CD8-positive, alpha-beta memory T cell (primary cell): ENCODE measurements at regions of chr1 and their contacts with region 1.

Region 1: DNA sequence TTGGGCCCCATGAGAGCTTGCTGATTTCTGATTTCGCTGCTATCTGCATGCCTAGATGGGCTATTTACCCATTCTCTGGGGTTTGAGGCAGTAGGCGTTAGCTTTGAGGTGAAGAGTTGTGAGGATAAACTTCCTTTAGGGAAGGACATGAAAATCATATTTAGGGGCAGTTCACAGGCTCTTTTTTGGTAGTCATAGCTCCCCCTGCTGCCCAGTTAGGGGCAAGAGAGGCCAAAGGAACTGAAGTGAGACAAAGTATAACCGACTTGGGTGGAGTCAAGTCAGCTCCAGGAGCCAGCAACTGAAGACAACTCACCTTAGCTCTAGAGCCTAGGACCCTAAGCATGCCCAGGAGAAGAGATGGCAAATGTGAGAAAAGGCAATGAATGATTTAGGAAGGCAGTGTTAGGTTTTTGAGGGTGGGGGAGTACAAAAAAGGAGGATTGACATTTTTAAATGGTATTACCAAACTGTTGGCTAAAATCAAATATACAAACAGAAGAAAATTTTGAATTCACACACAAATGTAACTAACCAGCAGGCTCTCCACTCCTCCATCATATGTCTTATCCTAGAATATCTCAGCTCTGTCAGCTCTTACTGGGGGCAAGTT is 625.2 kb downstream of the LMO4 start:
- DNase-seq: peak; percentile 3 to 62 (median 39)
- H3K4me3 ChIP-seq: no peak overlapping the region
- H3K4me3 Mint-ChIP-seq: no peak overlapping the region
- H3K27ac ChIP-seq: no peak overlapping the region
- H3K27ac Mint-ChIP-seq: no peak overlapping the region
- H3K4me1 ChIP-seq: no peaks in the 10 kb centered on the region
- H3K4me1 Mint-ChIP-seq: no peaks in the 10 kb centered on the region
- H3K27me3 ChIP-seq: no peaks in the 10 kb centered on the region
- H3K27me3 Mint-ChIP-seq: peaks cover 2 to 45% of the 10 kb centered on the region in 2 donors

Region 2: DNA sequence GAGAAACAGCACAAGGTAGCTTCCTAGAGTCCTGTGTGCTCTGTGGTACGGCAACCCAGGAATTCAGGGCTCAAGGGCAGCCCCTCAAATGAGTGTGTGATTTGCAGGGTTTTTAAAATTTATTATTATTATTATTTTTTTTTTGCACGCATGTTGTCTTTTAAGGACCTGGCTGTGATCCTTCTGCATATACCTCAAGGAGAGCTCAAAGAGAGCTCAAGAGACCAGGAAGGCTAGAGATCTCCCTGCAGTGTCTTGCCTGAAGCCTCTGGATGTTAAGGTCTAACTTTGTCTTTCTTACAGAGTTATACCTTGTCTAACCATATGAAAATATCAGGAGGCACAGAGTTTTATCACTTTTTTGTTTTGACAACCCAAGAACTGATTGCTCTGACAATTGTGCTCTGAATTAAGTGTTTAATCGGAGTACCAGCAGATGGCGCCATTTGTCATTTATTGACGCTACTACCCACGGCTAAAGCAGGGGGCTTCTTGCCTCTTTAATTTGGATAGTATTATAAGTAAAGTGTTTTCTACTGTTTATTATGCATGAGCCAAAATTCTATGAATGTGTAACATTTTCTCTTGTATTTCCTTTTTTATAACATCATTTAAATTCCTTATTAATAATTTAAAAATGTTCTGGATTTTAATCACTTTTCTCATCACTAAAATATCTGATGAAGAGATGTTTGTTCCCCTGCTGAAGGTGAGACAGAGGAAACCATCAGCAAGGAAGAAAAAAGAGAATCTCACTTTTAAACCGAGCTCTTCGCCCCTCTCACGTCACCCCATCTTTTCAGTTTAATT is 660.9 kb before region 1 on chr1:
- CTCF ChIA-PET with region 1: interaction called, 26 read pairs
- POLR2A ChIA-PET with region 1: no interaction called
- DNase-seq: peak; percentile 36 to 69 (median 48)
- H3K4me3 ChIP-seq: no peak overlapping the region
- H3K4me3 Mint-ChIP-seq: no peak overlapping the region
- H3K27ac ChIP-seq: no peak overlapping the region
- H3K27ac Mint-ChIP-seq: no peak overlapping the region
- H3K4me1 ChIP-seq: no peaks in the 10 kb centered on the region
- H3K4me1 Mint-ChIP-seq: no peaks in the 10 kb centered on the region
- H3K27me3 ChIP-seq: no peaks in the 10 kb centered on the region
- H3K27me3 Mint-ChIP-seq: peaks cover 10 to 12% of the 10 kb centered on the region in 2 donors

Region 3: GRCh38 chr1:87325982-87326738 is 627.7 kb before region 1 on chr1:
- CTCF ChIA-PET with region 1: interaction called, 22 read pairs
- POLR2A ChIA-PET with region 1: no interaction called
- DNase-seq: peak in 4 of 5 donors; percentile 38 to 55 (median 54)
- H3K4me3 ChIP-seq: no peak overlapping the region
- H3K4me3 Mint-ChIP-seq: peak overlapping the region in 3 of 7 donors; percentile 33 to 80 (median 38)
- H3K27ac ChIP-seq: no peak overlapping the region
- H3K27ac Mint-ChIP-seq: peak overlapping the region; percentile 1 to 91 (median 82)
- H3K4me1 ChIP-seq: peaks cover 10% of the 10 kb centered on the region
- H3K4me1 Mint-ChIP-seq: peaks cover 21 to 39% (median 35%) of the 10 kb centered on the region in 3 donors
- H3K27me3 ChIP-seq: no peaks in the 10 kb centered on the region
- H3K27me3 Mint-ChIP-seq: peaks cover 0 to 6% of the 10 kb centered on the region in 2 donors

Region 4: DNA sequence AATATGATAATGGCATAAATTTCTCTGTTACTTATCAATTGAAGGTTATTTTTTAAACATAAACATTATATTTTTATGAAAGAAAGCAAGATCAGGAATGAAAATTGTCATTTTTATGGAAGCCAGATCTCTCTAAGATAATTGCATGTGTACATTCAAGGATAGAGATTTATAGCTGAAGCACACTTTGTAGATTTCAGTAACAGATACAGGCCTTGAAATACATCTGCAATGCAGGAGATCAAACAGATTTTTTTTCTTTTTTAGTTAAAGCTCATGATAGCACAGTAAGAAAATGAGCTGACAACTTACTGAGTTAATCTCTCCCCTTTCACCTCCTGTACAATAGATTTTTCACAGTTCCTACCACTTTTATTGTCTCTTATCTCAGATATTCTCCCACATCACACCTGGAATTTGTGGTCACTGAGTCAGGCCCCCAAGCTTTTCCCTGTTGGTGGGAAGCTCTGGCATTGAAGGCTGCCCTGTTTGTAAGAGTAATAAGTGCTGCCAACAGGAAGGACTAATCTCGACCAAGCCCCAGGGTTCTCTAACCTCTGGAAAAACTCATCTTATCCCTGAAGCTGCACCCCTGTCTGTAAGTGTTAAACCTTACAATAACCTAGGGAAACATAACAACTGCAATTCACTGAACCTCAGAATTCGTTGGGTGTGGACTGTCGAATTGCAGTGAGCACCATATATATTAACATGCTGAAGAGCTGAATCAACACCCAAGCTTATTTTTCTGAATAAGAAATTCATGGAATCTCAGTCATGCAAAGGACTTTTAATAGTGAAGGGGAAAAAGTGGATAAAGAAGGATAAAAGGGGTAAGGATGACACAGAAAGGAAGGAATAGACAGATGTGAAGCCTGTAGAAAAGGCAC is 26.2 kb before region 1 on chr1:
- CTCF ChIA-PET with region 1: no interaction called
- POLR2A ChIA-PET with region 1: no interaction called
- DNase-seq: no peak
- H3K4me3 ChIP-seq: no peak overlapping the region
- H3K4me3 Mint-ChIP-seq: no peak overlapping the region
- H3K27ac ChIP-seq: no peak overlapping the region
- H3K27ac Mint-ChIP-seq: no peak overlapping the region
- H3K4me1 ChIP-seq: no peaks in the 10 kb centered on the region
- H3K4me1 Mint-ChIP-seq: no peaks in the 10 kb centered on the region
- H3K27me3 ChIP-seq: no peaks in the 10 kb centered on the region
- H3K27me3 Mint-ChIP-seq: peaks cover 4% of the 10 kb centered on the region in 2 donors